ENCODE measurements at regions of chr19 and their contacts with region 1.

Region 1: GRCh38 chr19:55653758-55654539 is 886 bp upstream of the U2AF2 start:
- DNase-seq: peak; percentile 100
- H3K4me3 ChIP-seq: peak overlapping the region; percentile 83
- H3K27ac ChIP-seq: peak overlapping the region; percentile 99
- H3K4me1 ChIP-seq: peaks cover 25% of the 10 kb centered on the region
- H3K27me3 ChIP-seq: no peaks in the 10 kb centered on the region
- CTCF ChIP-seq: peak; percentile 99

Region 2: GRCh38 chr19:55624109-55625003 is 29.6 kb before region 1 on chr19 and contains the start of gene ZNF784:
- CTCF ChIA-PET with region 1: interaction called, 11 read pairs
- POLR2A ChIA-PET with region 1: no interaction called
- intact Hi-C with region 1: no loop called
- DNase-seq: peak; percentile 96
- H3K4me3 ChIP-seq: peak within 1 kb of the TSS; percentile 67
- H3K27ac ChIP-seq: peak within 1 kb of the TSS; percentile 97
- H3K4me1 ChIP-seq: peaks cover 5% of the 10 kb centered on the region
- H3K27me3 ChIP-seq: no peaks in the 10 kb centered on the region
- CTCF ChIP-seq: no peak
- total RNA-seq, gene ZNF784: 6.8 and 7.1 TPM in 2 replicates

Region 3: GRCh38 chr19:55674841-55675660 is 21.1 kb after region 1 on chr19 and contains the start of gene EPN1:
- CTCF ChIA-PET with region 1: interaction called, 6 read pairs
- POLR2A ChIA-PET with region 1: no interaction called
- intact Hi-C with region 1: loop called (anchors 2 kb)
- DNase-seq: peak; percentile 99
- H3K4me3 ChIP-seq: peak within 1 kb of the TSS; percentile 94
- H3K27ac ChIP-seq: peak within 1 kb of the TSS; percentile 92
- H3K4me1 ChIP-seq: peaks cover 51% of the 10 kb centered on the region
- H3K27me3 ChIP-seq: no peaks in the 10 kb centered on the region
- CTCF ChIP-seq: no peak
- total RNA-seq, gene EPN1: 178 and 186 TPM in 2 replicates